ENCODE measurements at regions of chr19 and their contacts with region 1.

Region 1: DNA sequence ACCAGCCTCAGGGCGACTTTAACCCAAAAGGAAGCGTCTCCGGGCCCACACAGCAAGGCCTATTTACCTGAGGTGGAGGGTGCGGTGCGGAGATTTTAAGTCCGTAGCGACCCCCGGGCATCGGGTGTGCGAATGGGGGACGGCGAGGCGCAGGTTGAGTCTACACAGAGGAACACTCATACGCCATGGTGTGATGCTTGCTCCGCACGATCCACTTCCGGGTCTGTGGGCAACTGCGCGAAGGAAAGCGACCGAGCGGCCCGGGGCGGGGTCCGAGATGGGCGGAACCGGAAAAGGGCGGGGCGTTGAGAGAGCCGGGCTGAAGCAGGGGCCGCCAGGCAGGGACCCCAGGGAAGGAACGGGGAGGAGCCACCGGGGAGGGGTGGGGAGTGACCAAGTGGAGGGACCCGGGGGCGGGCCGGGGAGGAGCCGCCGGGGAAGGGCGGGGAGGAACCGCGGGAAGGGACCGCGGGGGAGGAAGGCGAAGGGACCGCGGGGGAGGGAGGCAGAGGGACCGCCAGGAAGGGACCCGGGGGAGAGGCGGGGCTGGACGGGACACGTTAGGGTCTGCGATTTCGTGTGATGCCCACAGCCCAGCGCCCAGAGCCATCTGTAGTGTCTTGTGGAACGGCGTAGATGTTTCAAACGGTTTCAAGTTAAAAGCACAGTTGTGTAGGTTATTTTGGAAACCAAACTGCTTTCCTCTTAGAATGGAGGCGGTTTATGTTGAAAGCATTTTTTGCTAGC is at the start of gene ZNF160:
- DNase-seq: peak; percentile 99
- H3K4me3 ChIP-seq: peak within 1 kb of the TSS; percentile 60 to 86 (median 75)
- H3K27ac ChIP-seq: peak within 1 kb of the TSS; percentile 86 to 94 (median 90)
- H3K4me1 ChIP-seq: peaks cover 0 to 21% (median 16%) of the 10 kb centered on the region in 4 donors
- H3K27me3 ChIP-seq: no peaks in the 10 kb centered on the region
- CTCF ChIP-seq: no peak
- EP300 ChIP-seq: no peak
- POLR2A ChIP-seq: peak; percentile 79 to 81
- total RNA-seq, gene ZNF160: 20.9 to 70.3 (median 31.8) TPM

Region 2: GRCh38 chr19:53132141-53132991 is 29.0 kb after region 1 on chr19 and contains the start of gene ZNF415:
- intact Hi-C with region 1: loop called (anchors 1 kb)
- DNase-seq: peak; percentile 88
- H3K4me3 ChIP-seq: peak within 1 kb of the TSS; percentile 47 to 84 (median 72)
- H3K27ac ChIP-seq: peak within 1 kb of the TSS; percentile 76 to 83 (median 80)
- H3K4me1 ChIP-seq: peaks cover 0 to 26% (median 14%) of the 10 kb centered on the region in 4 donors
- H3K27me3 ChIP-seq: no peaks in the 10 kb centered on the region
- CTCF ChIP-seq: no peak
- EP300 ChIP-seq: no peak
- POLR2A ChIP-seq: peak; percentile 21 to 27
- total RNA-seq, gene ZNF415: 10.7 to 16.9 (median 13.0) TPM

Region 3: DNA sequence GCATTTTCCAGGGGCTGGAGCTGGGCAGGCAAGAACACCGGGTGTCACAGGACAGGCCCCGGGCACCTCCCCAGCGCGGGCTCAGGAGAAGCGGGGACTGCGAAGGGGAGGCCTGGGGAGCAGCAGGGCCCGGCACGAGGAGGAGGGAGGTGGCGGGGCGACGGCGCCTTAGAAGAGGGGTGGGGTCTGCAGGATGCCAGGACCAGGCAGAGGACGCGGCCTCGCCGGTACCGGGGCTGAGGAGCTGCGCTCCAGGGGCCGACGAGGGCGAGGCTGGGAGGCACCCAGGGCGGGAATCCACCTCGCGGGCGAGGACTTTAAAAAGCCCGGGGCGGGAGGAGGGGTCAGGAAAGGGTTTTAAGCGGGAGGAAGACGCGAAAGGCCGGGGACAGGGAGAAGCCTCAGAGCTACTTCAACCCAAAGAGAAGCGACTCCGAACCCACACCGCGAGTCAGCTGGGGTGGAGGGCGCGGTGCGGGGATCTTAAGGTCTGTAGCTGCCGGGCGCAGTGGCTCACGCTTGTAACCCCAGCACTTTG is 54.8 kb after region 1 on chr19:
- intact Hi-C with region 1: loop called (anchors 1 kb)
- DNase-seq: peak; percentile 66
- H3K4me3 ChIP-seq: peak overlapping the region; percentile 61 to 71 (median 68)
- H3K27ac ChIP-seq: peak overlapping the region; percentile 68 to 82 (median 76)
- H3K4me1 ChIP-seq: peaks cover 0 to 21% (median 16%) of the 10 kb centered on the region in 4 donors
- H3K27me3 ChIP-seq: no peaks in the 10 kb centered on the region
- CTCF ChIP-seq: no peak
- EP300 ChIP-seq: no peak
- POLR2A ChIP-seq: no peak

Measured in sigmoid colon (tissue), 7 donors.